ENCODE measurements at regions of chr2 and their contacts with region 1.

Region 1: GRCh38 chr2:74178201-74179062 is at the start of gene MOB1A:
- DNase-seq: peak; percentile 98
- ATAC-seq: peak; percentile 99
- total RNA-seq, gene MOB1A: 59.3 TPM

Region 2: GRCh38 chr2:74198461-74199274 is 20.2 kb after region 1 on chr2 and contains the start of gene MTHFD2:
- intact Hi-C with region 1: loop called (anchors 1 kb)
- DNase-seq: peak; percentile 97
- ATAC-seq: peak; percentile 98
- total RNA-seq, gene MTHFD2: 24.2 TPM

Region 3: GRCh38 chr2:74212702-74213410 is 34.4 kb after region 1 on chr2:
- intact Hi-C with region 1: no loop called
- DNase-seq: no peak
- ATAC-seq: no peak